A549 (cell line): ENCODE measurements at regions of chr3 and their contacts with region 1.

Region 1: DNA sequence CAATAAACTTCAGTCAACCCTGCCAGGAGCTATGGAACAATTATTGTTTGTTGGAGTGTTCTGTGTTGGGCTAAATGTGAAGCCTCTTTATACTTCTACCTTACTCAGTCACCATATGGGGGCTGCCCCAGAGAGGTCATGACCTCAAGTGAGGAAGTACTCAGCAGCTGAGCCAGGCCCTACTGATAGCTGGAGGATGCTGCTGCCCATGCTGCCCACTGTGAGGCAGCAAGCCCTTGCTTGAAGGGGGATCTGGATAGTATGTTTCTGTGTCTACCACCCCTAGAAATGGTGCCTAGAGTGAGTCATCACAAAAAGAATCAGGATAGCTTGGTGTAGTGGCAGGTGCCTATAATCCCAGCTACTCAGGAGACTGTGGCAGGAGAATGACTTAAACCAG is 4.5 kb upstream of the RPL24 start:
- DNase-seq: no peak
- ATAC-seq: no peak
- H3K4me3 ChIP-seq: no peak overlapping the region
- H3K27ac ChIP-seq: no peak overlapping the region
- H3K4me1 ChIP-seq: peaks cover 5% of the 10 kb centered on the region
- CTCF ChIP-seq: no peak
- EP300 ChIP-seq: no peak
- POLR2A ChIP-seq: no peak
- RAD21 ChIP-seq: no peak

Region 2: GRCh38 chr3:101703169-101703568 is 12.2 kb after region 1 on chr3:
- CTCF ChIA-PET with region 1: interaction called, 10 read pairs
- POLR2A ChIA-PET with region 1: interaction called, 3 read pairs
- DNase-seq: peak in 1 of 2 experiments; percentile 49
- ATAC-seq: peak; percentile 74 to 88
- H3K4me3 ChIP-seq: no peak overlapping the region
- H3K27ac ChIP-seq: peak overlapping the region in 1 of 2 experiments; percentile 47; a peak in 3 of 6 replicates
- H3K4me1 ChIP-seq: peaks cover 9% of the 10 kb centered on the region; the same call in 2 of the 3 replicates
- CTCF ChIP-seq: no peak
- EP300 ChIP-seq: no peak
- POLR2A ChIP-seq: no peak
- RAD21 ChIP-seq: no peak